Activated CD4-positive, alpha-beta T cell treated with anti-CD3 and anti-CD28 coated beads, Interleukin-2, amount 10 ng/mL, durations not matched to agents 24 days and 14 days (primary cell): ENCODE measurements at regions of chr10 and their contacts with region 1.

Region 1: GRCh38 chr10:511101-511848 is 178.2 kb downstream of the DIP2C start:
- DNase-seq: peak; percentile 93
- H3K4me3 Mint-ChIP-seq: no peak overlapping the region
- H3K27ac Mint-ChIP-seq: no peak overlapping the region
- H3K4me1 Mint-ChIP-seq: peaks cover 10% of the 10 kb centered on the region
- H3K27me3 Mint-ChIP-seq: peaks cover 6% of the 10 kb centered on the region

Region 2: GRCh38 chr10:804191-804781 is 293.0 kb after region 1 on chr10:
- intact Hi-C with region 1: loop called (anchors 10 kb)
- DNase-seq: no peak
- H3K4me3 Mint-ChIP-seq: no peak overlapping the region
- H3K27ac Mint-ChIP-seq: no peak overlapping the region
- H3K4me1 Mint-ChIP-seq: peaks cover 3% of the 10 kb centered on the region
- H3K27me3 Mint-ChIP-seq: no peaks in the 10 kb centered on the region

Region 3: GRCh38 chr10:1074748-1075308 is 563.6 kb after region 1 on chr10:
- intact Hi-C with region 1: loop called (anchors 10 kb)
- DNase-seq: no peak
- H3K4me3 Mint-ChIP-seq: no peak overlapping the region
- H3K27ac Mint-ChIP-seq: peak overlapping the region; percentile 56
- H3K4me1 Mint-ChIP-seq: peaks cover 11% of the 10 kb centered on the region
- H3K27me3 Mint-ChIP-seq: no peaks in the 10 kb centered on the region